Endothelial cell of umbilical vein (primary cell): ENCODE measurements at regions of chr4 and their contacts with region 1.

Region 1: GRCh38 chr4:75673027-75673958 is at the start of gene G3BP2:
- DNase-seq: peak; percentile 99
- H3K4me3 ChIP-seq: peak within 1 kb of the TSS; percentile 74 to 94 (median 84)
- H3K27ac ChIP-seq: peak within 1 kb of the TSS; percentile 83
- H3K4me1 ChIP-seq: peaks cover 25% of the 10 kb centered on the region
- H3K27me3 ChIP-seq: no peaks in the 10 kb centered on the region
- CTCF ChIP-seq: no peak
- POLR2A ChIP-seq: peak; percentile 67
- total RNA-seq, gene G3BP2: 180 and 194 TPM in 2 replicates

Region 2: DNA sequence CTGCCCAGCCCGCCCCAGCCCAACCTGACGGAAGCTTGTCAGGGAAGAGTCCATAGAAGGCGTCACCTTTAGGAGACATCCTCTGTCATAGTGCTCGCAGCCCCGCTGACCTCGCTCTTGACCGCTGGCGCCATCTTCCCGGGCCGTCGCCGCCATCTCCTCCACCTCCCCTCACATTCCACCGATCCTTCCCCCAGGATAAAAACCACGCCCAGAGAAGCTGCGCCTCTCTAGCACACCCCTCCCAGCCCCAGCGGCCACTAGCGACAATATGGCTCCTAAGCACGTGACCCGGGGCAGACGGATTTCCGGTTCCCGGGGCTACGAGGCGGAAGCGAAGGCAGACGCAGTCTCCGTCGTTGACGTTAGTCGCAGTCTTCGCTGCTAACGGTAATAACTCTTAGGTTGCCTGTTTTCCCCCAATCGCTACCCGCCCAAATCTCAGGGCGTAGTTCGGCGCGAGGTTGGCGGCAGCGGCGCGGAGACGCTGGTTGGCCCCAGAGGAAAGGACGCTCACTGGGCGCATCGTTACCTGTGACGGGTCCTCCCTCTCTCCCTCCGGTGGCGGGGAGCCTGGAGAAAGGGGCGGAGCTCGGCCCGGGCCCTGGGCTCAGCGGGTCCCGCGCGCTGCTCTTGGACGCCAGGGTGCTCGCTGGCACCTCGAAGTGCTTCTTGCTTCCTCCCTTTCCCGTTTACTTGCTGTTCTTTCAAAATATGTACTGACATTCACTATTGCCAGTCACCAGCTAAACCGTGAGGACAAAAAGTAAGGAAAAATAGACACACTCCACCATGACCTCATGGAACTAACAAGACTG is 159.0 kb before region 1 on chr4 and contains the starts of genes RCHY1 and THAP6:
- CTCF ChIA-PET with region 1: interaction called, 3 read pairs
- POLR2A ChIA-PET with region 1: no interaction called
- dilution Hi-C with region 1: no loop called
- intact Hi-C with region 1: loop called (anchors 1 kb)
- DNase-seq: peak; percentile 92
- H3K4me3 ChIP-seq: peak within 1 kb of the TSS; percentile 71 to 94 (median 81)
- H3K27ac ChIP-seq: peak within 1 kb of the TSS; percentile 72
- H3K4me1 ChIP-seq: peaks cover 35% of the 10 kb centered on the region
- H3K27me3 ChIP-seq: no peaks in the 10 kb centered on the region
- CTCF ChIP-seq: no peak
- POLR2A ChIP-seq: peak; percentile 93
- total RNA-seq, gene RCHY1: 29.1 and 30.9 TPM in 2 replicates
- total RNA-seq, gene THAP6: 6.8 and 8.0 TPM in 2 replicates

Region 3: GRCh38 chr4:75702919-75703411 is 29.7 kb after region 1 on chr4:
- CTCF ChIA-PET with region 1: interaction called, 3 read pairs
- POLR2A ChIA-PET with region 1: no interaction called
- dilution Hi-C with region 1: no loop called
- intact Hi-C with region 1: loop called (anchors 2 kb)
- DNase-seq: no peak
- H3K4me3 ChIP-seq: no peak overlapping the region
- H3K27ac ChIP-seq: no peak overlapping the region
- H3K4me1 ChIP-seq: no peaks in the 10 kb centered on the region
- H3K27me3 ChIP-seq: no peaks in the 10 kb centered on the region
- CTCF ChIP-seq: no peak
- POLR2A ChIP-seq: no peak

Region 4: GRCh38 chr4:75745161-75745560 is 71.9 kb after region 1 on chr4:
- CTCF ChIA-PET with region 1: no interaction called
- POLR2A ChIA-PET with region 1: interaction called, 10 read pairs
- dilution Hi-C with region 1: no loop called
- intact Hi-C with region 1: loop called (anchors 1 kb)
- DNase-seq: peak; percentile 74
- H3K4me3 ChIP-seq: no peak overlapping the region
- H3K27ac ChIP-seq: peak overlapping the region; percentile 75
- H3K4me1 ChIP-seq: peaks cover 25% of the 10 kb centered on the region
- H3K27me3 ChIP-seq: no peaks in the 10 kb centered on the region
- CTCF ChIP-seq: no peak
- POLR2A ChIP-seq: no peak